ENCODE measurements at regions of chr4 and their contacts with region 1.

Region 1: GRCh38 chr4:76960014-76960413 is 10.5 kb downstream of the SEPTIN11 start:
- DNase-seq: no peak
- ATAC-seq: peak; percentile 90
- H3K4me3 Mint-ChIP-seq: no peak overlapping the region
- H3K27ac Mint-ChIP-seq: no peak overlapping the region
- H3K4me1 Mint-ChIP-seq: peaks cover 23% of the 10 kb centered on the region
- H3K27me3 Mint-ChIP-seq: peaks cover 4% of the 10 kb centered on the region

Region 2: DNA sequence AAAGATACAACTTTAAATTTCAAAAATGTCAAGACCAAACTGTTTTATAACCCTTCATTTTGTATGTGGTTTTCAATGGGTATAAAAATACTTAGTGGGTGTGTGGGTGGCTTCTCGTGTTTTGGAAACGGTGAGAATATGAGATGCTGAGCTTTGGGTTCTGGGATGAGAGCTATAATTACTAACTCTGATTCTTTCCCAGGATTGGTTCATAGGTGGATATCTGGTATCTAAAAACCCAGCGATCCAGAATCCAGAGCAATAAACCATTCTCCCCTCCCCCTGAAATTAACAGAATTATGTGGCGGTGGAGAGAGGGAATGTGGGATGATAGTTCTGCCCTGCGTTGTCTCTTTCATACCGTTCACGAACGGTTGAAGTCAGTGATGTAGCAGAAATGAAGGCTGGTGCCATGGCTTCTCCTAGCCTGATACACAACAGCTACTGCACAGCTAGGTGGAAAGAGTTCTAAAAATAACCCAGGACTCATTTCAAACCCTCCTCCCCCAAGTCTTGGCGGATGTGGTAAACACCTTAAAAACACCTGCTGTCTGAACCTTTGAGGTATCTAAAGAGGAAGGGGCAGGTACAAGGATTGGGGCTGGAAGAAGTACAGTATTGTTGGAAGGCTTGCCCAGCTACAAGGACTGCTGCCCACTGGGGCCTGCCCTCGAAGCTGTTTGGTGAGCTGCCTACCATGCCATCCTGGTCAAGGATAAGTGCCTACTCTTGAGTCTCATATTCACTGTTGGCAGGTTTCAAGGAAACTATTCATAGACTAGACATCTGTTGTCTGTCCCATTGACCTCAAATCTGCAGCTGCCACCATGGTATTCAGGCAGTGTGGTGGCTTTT is 34.0 kb after region 1 on chr4:
- CTCF ChIA-PET with region 1: interaction called, 3 read pairs
- POLR2A ChIA-PET with region 1: no interaction called
- intact Hi-C with region 1: loop called (anchors 2 kb)
- DNase-seq: peak; percentile 70
- ATAC-seq: peak; percentile 80
- H3K4me3 Mint-ChIP-seq: peak overlapping the region; percentile 41
- H3K27ac Mint-ChIP-seq: peak overlapping the region; percentile 55
- H3K4me1 Mint-ChIP-seq: peaks cover 63% of the 10 kb centered on the region
- H3K27me3 Mint-ChIP-seq: peaks cover 7% of the 10 kb centered on the region